HEK293T (cell line): ENCODE measurements at regions of chr7 and their contacts with region 1.

Region 1: GRCh38 chr7:150404805-150405583 is 25.9 kb downstream of the ZNF775 start:
- DNase-seq: peak; percentile 97

Region 2: DNA sequence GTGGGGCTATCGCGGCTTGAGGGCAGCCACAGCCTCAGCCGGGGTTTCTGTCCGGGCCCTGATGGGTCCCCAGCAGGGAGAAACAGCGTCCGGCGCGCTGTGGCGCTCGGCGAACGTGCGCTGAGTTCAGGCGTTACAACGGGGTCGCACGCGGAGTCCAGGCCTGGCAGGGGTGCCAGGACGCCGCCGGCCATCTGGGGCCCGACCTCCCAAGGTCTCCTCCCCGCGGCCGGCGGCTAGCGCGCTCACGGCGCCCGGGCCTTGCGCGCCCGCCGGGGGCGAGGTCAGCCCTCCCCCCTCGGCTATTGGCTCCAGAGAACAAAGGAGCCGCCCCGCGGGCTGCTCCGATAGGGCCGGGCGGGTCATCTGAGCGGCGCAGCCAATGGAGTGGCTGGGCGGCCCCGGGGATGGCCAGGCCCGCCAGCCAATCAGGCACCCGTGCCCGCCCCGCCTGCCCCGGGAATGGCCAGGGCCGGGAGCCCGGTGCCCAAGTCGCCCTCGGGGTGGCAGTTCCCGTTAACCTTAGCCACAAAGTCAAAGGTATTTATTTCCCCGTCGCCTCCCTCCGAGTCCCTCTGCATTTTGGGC is 26.0 kb before region 1 on chr7 and contains the start of gene ZNF775:
- CTCF ChIA-PET with region 1: no interaction called
- POLR2A ChIA-PET with region 1: interaction called, 10 read pairs
- DNase-seq: peak; percentile 100

Region 3: DNA sequence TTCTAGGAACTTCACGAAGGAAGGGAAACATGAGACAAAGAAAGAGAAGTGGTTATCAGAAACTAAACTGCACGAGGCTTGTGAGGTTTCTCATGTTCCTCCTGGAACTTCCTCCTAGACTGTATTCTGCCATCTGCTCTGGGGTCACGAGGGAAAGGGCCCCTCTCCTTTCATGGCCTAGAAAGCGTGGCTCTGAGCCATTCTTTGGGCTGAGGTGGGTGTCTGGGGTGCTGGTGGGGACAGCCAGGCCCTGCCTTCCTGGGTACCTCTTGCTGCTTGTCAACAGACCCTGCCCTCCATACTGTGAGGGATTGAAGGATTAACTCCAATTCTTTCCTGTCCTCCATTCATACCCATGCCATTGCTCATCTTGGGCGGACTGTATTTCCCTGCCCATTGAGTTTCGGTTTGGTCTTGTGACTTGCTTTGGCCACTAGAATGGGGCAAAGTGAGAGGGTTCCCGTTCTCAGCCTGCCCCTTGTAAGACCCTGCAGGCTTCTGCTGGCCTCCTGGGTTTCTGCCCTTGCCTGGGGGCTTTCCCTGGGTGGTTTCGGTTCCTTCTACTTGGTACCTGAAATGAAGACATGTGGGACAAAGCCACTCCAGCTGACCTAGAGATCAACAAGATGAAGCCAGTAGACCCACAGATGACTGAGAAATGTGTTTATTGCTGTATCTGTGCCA is 30.5 kb after region 1 on chr7:
- CTCF ChIA-PET with region 1: no interaction called
- POLR2A ChIA-PET with region 1: no interaction called
- DNase-seq: no peak